WTC11 (cell line): ENCODE measurements at regions of chr12 and their contacts with region 1.

Region 1: GRCh38 chr12:62435303-62436163 is 31.1 kb upstream of the MON2 start:
- DNase-seq: peak; percentile 70
- ATAC-seq: peak; percentile 94
- H3K4me3 Mint-ChIP-seq: peak overlapping the region; percentile 86
- H3K27ac Mint-ChIP-seq: no peak overlapping the region
- H3K4me1 Mint-ChIP-seq: peaks cover 16% of the 10 kb centered on the region
- H3K27me3 Mint-ChIP-seq: peaks cover 62% of the 10 kb centered on the region
- CTCF ChIP-seq: no peak

Region 2: DNA sequence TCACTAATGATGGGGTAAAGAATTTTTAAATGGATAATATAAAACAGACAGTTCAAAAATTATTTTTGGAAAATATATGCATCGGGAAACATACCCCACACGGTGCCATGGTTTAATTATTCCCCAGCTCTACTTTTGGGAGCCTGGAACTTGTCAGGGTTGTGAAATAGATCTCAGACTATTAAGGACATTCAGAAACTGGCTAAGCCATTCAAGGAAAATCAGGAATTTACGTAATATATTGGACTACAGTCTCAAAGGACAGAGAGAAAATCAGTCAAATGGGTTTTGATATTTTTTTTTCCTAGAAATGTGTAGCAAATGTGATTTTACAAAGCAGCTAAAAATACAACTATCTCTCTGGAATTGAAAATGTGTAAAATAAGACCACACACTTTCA is 26.5 kb before region 1 on chr12:
- CTCF ChIA-PET with region 1: interaction called, 10 read pairs
- POLR2A ChIA-PET with region 1: no interaction called
- DNase-seq: no peak
- ATAC-seq: no peak
- H3K4me3 Mint-ChIP-seq: no peak overlapping the region
- H3K27ac Mint-ChIP-seq: no peak overlapping the region
- H3K4me1 Mint-ChIP-seq: no peaks in the 10 kb centered on the region
- H3K27me3 Mint-ChIP-seq: no peaks in the 10 kb centered on the region
- CTCF ChIP-seq: no peak

Region 3: GRCh38 chr12:62466594-62467491 is 31.3 kb after region 1 on chr12 and contains the start of gene MON2:
- CTCF ChIA-PET with region 1: interaction called, 28 read pairs
- POLR2A ChIA-PET with region 1: no interaction called
- DNase-seq: peak; percentile 79
- ATAC-seq: peak; percentile 96
- H3K4me3 Mint-ChIP-seq: peak within 1 kb of the TSS; percentile 90
- H3K27ac Mint-ChIP-seq: peak within 1 kb of the TSS; percentile 46
- H3K4me1 Mint-ChIP-seq: peaks cover 8% of the 10 kb centered on the region
- H3K27me3 Mint-ChIP-seq: peaks cover 7% of the 10 kb centered on the region; the same call in 1 of the 2 replicates
- CTCF ChIP-seq: no peak
- total RNA-seq, gene MON2: 25.8 to 30.9 TPM (median 30.8 TPM) in 3 replicates

Region 4: GRCh38 chr12:62660756-62661155 is 225.2 kb after region 1 on chr12:
- CTCF ChIA-PET with region 1: no interaction called
- POLR2A ChIA-PET with region 1: no interaction called
- DNase-seq: no peak
- ATAC-seq: no peak
- H3K4me3 Mint-ChIP-seq: no peak overlapping the region
- H3K27ac Mint-ChIP-seq: peak overlapping the region; percentile 97
- H3K4me1 Mint-ChIP-seq: peaks cover 74% of the 10 kb centered on the region
- H3K27me3 Mint-ChIP-seq: peaks cover 8% of the 10 kb centered on the region
- CTCF ChIP-seq: no peak

Region 5: GRCh38 chr12:62799126-62799736 is 363.7 kb after region 1 on chr12:
- CTCF ChIA-PET with region 1: interaction called, 18 read pairs
- POLR2A ChIA-PET with region 1: no interaction called
- DNase-seq: peak; percentile 81
- ATAC-seq: peak; percentile 85
- H3K4me3 Mint-ChIP-seq: no peak overlapping the region
- H3K27ac Mint-ChIP-seq: no peak overlapping the region
- H3K4me1 Mint-ChIP-seq: peaks cover 28% of the 10 kb centered on the region
- H3K27me3 Mint-ChIP-seq: no peaks in the 10 kb centered on the region
- CTCF ChIP-seq: peak; percentile 88